CD8-positive, alpha-beta T cell (primary cell): ENCODE measurements at regions of chr17 and their contacts with region 1.

Region 1: GRCh38 chr17:75109407-75110233 is at the start of gene ARMC7:
- DNase-seq: peak; percentile 77 to 95 (median 91)
- ATAC-seq: peak; percentile 83
- H3K4me3 ChIP-seq: peak within 1 kb of the TSS; percentile 90 to 91
- H3K4me3 Mint-ChIP-seq: peak within 1 kb of the TSS; percentile 87
- H3K27ac ChIP-seq: peak within 1 kb of the TSS; percentile 42 to 75
- H3K27ac Mint-ChIP-seq: peak within 1 kb of the TSS; percentile 92
- H3K4me1 ChIP-seq: peaks cover 34% of the 10 kb centered on the region
- H3K4me1 Mint-ChIP-seq: peaks cover 33% of the 10 kb centered on the region
- H3K27me3 ChIP-seq: no peaks in the 10 kb centered on the region
- H3K27me3 Mint-ChIP-seq: no peaks in the 10 kb centered on the region
- CTCF ChIP-seq: no peak
- total RNA-seq, gene ARMC7: 2.0 to 3.0 TPM

Region 2: DNA sequence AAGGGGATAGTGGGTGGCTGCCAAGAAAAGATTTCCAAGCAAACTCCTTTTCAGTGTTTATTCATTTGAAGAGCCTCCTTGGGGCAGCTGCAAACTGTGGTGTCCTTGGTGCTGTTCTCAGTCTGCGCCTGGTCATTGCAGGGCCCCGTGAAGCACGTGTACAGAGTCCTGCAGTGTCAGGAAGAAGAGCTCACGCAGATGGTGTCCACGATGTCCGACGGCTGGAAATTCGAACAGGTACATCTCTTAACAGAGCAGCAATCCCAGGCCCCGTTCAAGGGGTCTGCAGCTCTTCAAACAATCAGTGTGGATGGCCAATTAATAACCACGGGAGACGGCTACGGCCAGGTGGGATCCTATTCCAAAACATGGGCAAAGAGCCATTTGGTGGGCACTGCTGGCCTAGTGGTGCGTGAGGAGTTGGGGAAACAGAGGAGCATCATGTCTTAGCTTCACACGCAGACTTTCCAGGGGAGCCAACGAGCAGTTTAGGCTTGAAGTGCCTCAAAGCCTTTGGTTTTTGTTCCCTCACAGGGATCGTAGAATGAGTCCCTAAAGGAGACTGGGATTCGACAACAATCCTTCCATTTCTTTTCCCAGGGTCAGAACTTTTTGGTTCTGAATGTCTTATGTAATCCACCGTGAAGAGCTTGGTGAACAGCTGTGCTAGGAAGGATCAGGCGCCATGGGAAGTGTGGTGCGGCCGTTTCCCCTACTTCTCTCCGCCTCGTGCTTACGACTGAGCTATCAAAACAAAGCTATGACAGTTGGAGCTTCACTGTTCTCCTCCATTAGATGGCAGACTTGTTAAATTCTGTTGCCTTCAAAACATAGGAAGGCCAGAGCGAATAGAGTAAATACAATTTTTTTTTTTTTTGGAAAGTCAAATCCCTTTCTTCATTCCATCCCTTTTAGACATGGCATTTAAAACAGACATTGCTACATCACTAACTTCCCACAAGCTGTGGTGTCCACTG is 50.0 kb before region 1 on chr17:
- CTCF ChIA-PET with region 1: interaction called, 18 read pairs
- POLR2A ChIA-PET with region 1: interaction called, 3 read pairs
- intact Hi-C with region 1: no loop called
- DNase-seq: peak in 2 of 9 experiments; percentile 26 to 47
- ATAC-seq: peak; percentile 64
- H3K4me3 ChIP-seq: no peak overlapping the region
- H3K4me3 Mint-ChIP-seq: no peak overlapping the region
- H3K27ac ChIP-seq: no peak overlapping the region
- H3K27ac Mint-ChIP-seq: peak overlapping the region; percentile 55
- H3K4me1 ChIP-seq: no peaks in the 10 kb centered on the region
- H3K4me1 Mint-ChIP-seq: peaks cover 14% of the 10 kb centered on the region
- H3K27me3 ChIP-seq: no peaks in the 10 kb centered on the region
- H3K27me3 Mint-ChIP-seq: no peaks in the 10 kb centered on the region
- CTCF ChIP-seq: peak; percentile 18

Region 3: GRCh38 chr17:75131280-75132017 is 21.8 kb after region 1 on chr17 and contains the start of gene NT5C:
- CTCF ChIA-PET with region 1: interaction called, 65 read pairs
- POLR2A ChIA-PET with region 1: interaction called, 32 read pairs
- intact Hi-C with region 1: loop called (anchors 1 kb)
- DNase-seq: peak in 8 of 9 experiments; percentile 43 to 82 (median 66)
- ATAC-seq: peak; percentile 79
- H3K4me3 ChIP-seq: peak within 1 kb of the TSS; percentile 80 to 84
- H3K4me3 Mint-ChIP-seq: peak within 1 kb of the TSS; percentile 86
- H3K27ac ChIP-seq: peak within 1 kb of the TSS; percentile 64 to 83
- H3K27ac Mint-ChIP-seq: peak within 1 kb of the TSS; percentile 77
- H3K4me1 ChIP-seq: peaks cover 8% of the 10 kb centered on the region
- H3K4me1 Mint-ChIP-seq: peaks cover 15% of the 10 kb centered on the region
- H3K27me3 ChIP-seq: no peaks in the 10 kb centered on the region
- H3K27me3 Mint-ChIP-seq: no peaks in the 10 kb centered on the region
- CTCF ChIP-seq: peak; percentile 19
- total RNA-seq, gene NT5C: 19.3 to 20.4 TPM

Region 4: DNA sequence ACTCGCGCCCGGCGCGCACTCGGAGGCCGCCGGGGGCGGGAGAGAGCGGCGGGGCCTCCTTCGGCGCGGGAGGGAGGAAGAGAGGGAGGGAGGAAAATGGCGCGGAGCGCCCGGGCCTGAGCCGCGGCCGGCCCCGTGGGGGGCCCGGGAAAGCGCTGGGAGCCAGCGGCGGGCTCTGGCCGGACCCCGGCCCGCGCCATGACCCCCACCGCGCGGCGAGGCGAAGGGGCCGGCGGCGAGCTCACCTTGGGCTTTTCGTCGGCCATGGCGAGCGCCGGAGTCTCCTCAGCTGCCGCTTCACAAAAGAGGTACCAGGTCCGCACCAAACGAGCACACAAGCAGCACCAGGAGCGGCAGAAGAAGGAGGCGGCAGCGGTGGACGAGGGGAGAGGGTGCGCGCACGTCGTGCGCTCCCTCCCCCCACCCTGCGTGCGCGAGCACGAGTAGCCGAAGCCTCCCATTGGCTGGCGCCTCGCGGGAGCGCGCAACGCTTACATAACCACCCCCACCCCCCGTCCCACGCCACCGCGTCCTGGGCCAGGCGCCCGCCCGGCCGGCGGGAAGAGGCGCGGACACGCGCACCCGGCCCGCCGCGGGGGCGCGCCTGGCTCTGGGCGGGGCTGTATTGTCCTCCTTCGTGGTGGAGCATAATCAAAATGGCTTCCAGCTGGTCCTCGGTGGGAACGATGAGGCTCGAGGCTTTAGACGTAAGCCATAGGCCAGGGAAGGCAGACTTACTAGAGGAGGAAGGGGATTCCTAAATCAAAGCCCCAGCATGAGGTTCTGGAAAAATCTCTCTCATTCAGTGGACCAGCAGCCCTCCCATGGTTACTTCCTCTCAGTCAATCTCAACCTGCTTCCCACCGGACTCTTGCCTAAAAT is 73.2 kb after region 1 on chr17 and contains the start of gene SUMO2:
- CTCF ChIA-PET with region 1: interaction called, 197 read pairs
- POLR2A ChIA-PET with region 1: interaction called, 3 read pairs
- intact Hi-C with region 1: loop called in 1 of 2 experiments (anchors 2 kb)
- DNase-seq: peak; percentile 89 to 98 (median 95)
- ATAC-seq: peak; percentile 77
- H3K4me3 ChIP-seq: peak within 1 kb of the TSS; percentile 68 to 82
- H3K4me3 Mint-ChIP-seq: peak within 1 kb of the TSS; percentile 92
- H3K27ac ChIP-seq: peak within 1 kb of the TSS; percentile 95
- H3K27ac Mint-ChIP-seq: peak within 1 kb of the TSS; percentile 98
- H3K4me1 ChIP-seq: peaks cover 28% of the 10 kb centered on the region
- H3K4me1 Mint-ChIP-seq: peaks cover 46% of the 10 kb centered on the region
- H3K27me3 ChIP-seq: no peaks in the 10 kb centered on the region
- H3K27me3 Mint-ChIP-seq: no peaks in the 10 kb centered on the region
- CTCF ChIP-seq: no peak
- total RNA-seq, gene SUMO2: 192 to 203 TPM

Region 5: DNA sequence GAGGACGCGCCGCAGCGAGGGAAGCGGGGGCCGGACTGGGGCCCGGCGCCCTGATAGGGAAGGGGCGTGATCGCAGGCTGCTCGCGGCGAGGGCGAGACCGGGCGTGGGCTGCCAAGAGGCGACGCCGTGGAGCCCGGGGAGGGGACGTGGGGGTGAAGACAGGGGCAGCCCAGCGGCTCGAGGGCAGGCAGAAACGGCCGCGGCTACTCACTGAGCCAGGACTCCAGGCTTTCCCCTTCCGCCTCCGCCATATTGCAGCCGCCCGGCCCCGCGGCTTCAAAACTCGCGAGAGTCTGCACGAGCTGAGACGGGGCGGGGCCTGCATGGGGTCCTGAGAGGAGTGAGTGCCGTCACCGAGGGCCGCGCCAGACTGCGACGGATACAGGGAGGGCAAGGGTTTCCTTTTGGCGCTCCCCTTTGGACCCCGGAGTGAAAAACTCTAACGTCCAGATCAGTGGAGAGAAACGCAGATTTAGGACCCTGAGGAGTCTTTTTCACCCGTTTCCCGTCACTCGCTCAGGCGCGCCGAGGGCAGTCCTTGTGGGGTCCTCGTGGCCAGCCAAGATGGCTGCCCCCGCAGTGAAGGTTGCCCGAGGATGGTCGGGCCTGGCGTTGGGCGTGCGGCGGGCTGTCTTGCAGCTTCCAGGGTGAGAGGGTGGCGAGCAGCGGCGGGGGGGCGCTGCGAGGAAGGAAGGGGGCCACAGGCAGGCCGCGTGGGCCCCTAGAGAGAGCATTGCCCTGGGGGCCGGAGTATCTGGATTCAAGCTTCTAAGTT is 151.9 kb after region 1 on chr17 and contains the starts of genes GGA3 and MRPS7:
- CTCF ChIA-PET with region 1: interaction called, 4 read pairs
- POLR2A ChIA-PET with region 1: interaction called, 8 read pairs
- intact Hi-C with region 1: loop called in 1 of 2 experiments (anchors 1 kb)
- DNase-seq: peak; percentile 93 to 98 (median 96)
- ATAC-seq: peak; percentile 94
- H3K4me3 ChIP-seq: peak within 1 kb of the TSS; percentile 89 to 97
- H3K4me3 Mint-ChIP-seq: peak within 1 kb of the TSS; percentile 99
- H3K27ac ChIP-seq: peak within 1 kb of the TSS; percentile 98 to 100
- H3K27ac Mint-ChIP-seq: peak within 1 kb of the TSS; percentile 100
- H3K4me1 ChIP-seq: peaks cover 27% of the 10 kb centered on the region
- H3K4me1 Mint-ChIP-seq: peaks cover 47% of the 10 kb centered on the region
- H3K27me3 ChIP-seq: no peaks in the 10 kb centered on the region
- H3K27me3 Mint-ChIP-seq: no peaks in the 10 kb centered on the region
- CTCF ChIP-seq: no peak
- total RNA-seq, gene GGA3: 103 to 107 TPM
- total RNA-seq, gene MRPS7: 42.0 to 43.9 TPM